ENCODE measurements at regions of chr4 and their contacts with region 1.

Region 1: GRCh38 chr4:88284439-88285234 is at the start of gene PPM1K:
- DNase-seq: peak; percentile 100
- ATAC-seq: peak; percentile 95 to 98 (median 96)
- H3K4me3 ChIP-seq: peak within 1 kb of the TSS; percentile 61 to 98 (median 80)
- H3K27ac ChIP-seq: peak within 1 kb of the TSS; percentile 94 to 99 (median 96)
- H3K4me1 ChIP-seq: peaks cover 0 to 37% (median 11%) of the 10 kb centered on the region in 12 donors
- H3K27me3 ChIP-seq: no peaks in the 10 kb centered on the region
- CTCF ChIP-seq: peak in 6 of 12 donors; percentile 8 to 47 (median 22)
- POLR2A ChIP-seq: peak; percentile 20 to 94
- total RNA-seq, gene PPM1K: 140 to 332 (median 245) TPM

Region 2: GRCh38 chr4:87856816-87857215 is 427.8 kb before region 1 on chr4:
- intact Hi-C with region 1: no loop called
- DNase-seq: no peak
- ATAC-seq: no peak
- H3K4me3 ChIP-seq: no peak overlapping the region
- H3K27ac ChIP-seq: no peak overlapping the region
- H3K4me1 ChIP-seq: peaks cover 0 to 22% (median 0%) of the 10 kb centered on the region in 12 donors
- H3K27me3 ChIP-seq: no peaks in the 10 kb centered on the region
- CTCF ChIP-seq: no peak
- POLR2A ChIP-seq: no peak

Region 3: DNA sequence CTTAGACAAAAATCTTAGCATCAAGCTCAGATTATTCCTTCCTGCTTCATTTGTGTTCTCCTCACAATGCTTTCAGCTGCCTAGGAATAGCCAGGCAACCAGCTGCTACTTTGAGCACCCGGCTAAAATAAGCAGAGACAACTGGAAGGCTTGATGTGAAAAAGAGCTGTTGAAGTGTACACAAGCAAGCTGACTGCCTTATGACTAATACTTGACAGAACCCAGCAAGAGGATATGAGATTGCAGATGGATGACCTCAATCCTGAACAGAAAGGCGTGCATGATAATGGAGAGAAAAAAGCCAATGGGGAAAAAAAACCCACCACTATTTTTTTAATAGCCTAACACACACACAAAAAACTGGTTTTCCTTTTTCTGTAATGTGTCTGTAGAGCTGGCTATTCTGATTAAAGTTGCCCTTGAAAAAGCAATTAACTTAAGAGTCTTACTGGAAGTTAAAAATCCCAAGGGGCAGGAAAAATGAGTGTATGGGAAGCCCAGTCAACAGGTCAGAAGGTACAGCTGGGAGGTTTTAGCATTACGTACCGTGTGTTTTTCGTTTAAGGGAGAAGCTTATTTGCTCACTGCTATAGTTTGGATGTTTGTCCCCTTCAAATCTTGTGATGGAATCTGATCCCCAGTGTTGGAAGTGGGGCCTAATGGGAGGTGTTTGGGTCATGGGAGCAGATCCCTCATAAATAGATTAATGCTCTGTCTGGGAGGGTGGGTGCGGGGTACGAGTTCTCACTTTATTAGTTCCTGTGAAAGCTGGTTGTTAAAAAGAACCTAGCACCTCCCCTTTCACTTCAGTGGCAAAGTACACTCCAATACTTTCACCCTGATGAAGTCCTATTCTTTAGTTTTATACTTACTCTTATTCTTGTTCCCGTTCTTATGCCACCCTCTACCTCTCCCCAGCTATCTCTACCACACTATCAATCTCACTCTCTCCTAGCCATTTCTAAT is 56.9 kb after region 1 on chr4:
- intact Hi-C with region 1: loop called in 4 of 10 experiments (anchors 1 to 5 kb)
- DNase-seq: peak in 4 of 5 donors; percentile 47 to 62 (median 54)
- ATAC-seq: peak; percentile 96 to 99 (median 98)
- H3K4me3 ChIP-seq: no peak overlapping the region
- H3K27ac ChIP-seq: peak overlapping the region; percentile 64 to 88 (median 82)
- H3K4me1 ChIP-seq: peaks cover 0 to 22% (median 11%) of the 10 kb centered on the region in 12 donors
- H3K27me3 ChIP-seq: no peaks in the 10 kb centered on the region
- CTCF ChIP-seq: no peak
- POLR2A ChIP-seq: no peak

Region 4: GRCh38 chr4:88378691-88379559 is 94.3 kb after region 1 on chr4 and contains the start of gene HERC6:
- intact Hi-C with region 1: loop called in 9 of 10 experiments (anchors 2 to 5 kb)
- DNase-seq: peak; percentile 81 to 89 (median 83)
- ATAC-seq: peak; percentile 91 to 98 (median 97)
- H3K4me3 ChIP-seq: peak within 1 kb of the TSS; percentile 46 to 100 (median 90)
- H3K27ac ChIP-seq: peak within 1 kb of the TSS; percentile 91 to 100 (median 97)
- H3K4me1 ChIP-seq: peaks cover 0 to 17% (median 0%) of the 10 kb centered on the region in 12 donors
- H3K27me3 ChIP-seq: no peaks in the 10 kb centered on the region
- CTCF ChIP-seq: peak; percentile 53 to 89 (median 70)
- POLR2A ChIP-seq: no peak
- total RNA-seq, gene HERC6: 6.1 to 22.0 (median 15.6) TPM

Region 5: DNA sequence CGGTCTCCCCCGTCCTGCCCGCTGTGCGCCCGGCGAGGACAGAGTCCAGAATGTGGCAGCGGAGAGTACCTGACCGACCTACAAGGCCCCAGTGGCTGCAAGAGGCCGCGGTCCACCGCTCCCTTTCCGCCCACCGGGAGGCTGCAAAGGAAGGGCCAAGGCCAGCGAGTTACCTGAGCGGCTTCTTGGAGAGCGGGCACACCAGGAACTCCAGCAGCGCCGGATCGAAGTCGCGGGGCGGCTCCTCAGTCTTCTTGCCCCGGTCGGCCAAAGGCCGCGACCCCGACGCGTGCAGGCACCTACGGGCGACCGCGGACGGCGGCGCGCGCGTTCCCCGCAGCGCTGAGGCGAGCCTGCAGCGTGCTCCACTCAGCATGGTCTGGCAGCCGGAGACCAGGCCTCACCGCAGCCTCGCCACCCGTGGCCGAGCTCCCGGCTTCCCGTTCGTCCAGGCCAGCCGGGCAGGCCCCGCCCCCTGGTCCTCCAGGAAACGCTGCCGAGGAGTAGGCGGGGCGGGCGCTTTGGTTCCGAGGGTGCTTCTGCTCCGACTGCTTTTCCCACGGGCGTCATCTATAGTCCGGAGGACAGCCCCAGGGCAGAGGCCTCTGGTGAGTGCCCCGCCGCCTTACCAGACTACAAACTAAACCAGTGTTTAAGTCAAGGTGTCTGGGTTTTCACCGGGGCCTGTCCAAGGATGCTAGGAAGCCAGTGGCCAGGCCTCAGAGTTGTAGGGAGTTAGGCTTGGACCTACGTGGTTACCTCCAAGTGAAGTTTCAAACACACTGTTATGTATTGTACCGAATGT is 238.9 kb after region 1 on chr4 and contains the start of gene PYURF:
- intact Hi-C with region 1: loop called in 2 of 10 experiments (anchors 5 kb)
- DNase-seq: peak; percentile 94 to 98 (median 97)
- ATAC-seq: peak; percentile 96 to 98 (median 98)
- H3K4me3 ChIP-seq: peak within 1 kb of the TSS; percentile 66 to 96 (median 90)
- H3K27ac ChIP-seq: peak within 1 kb of the TSS; percentile 60 to 94 (median 86)
- H3K4me1 ChIP-seq: peaks cover 0 to 45% (median 19%) of the 10 kb centered on the region in 12 donors
- H3K27me3 ChIP-seq: no peaks in the 10 kb centered on the region
- CTCF ChIP-seq: peak in 1 of 12 donors; percentile 5
- POLR2A ChIP-seq: peak; percentile 4 to 87
- total RNA-seq, gene PYURF: 46.3 to 63.6 (median 54.2) TPM